ENCODE measurements at regions of chr10 and their contacts with region 1.

Region 1: DNA sequence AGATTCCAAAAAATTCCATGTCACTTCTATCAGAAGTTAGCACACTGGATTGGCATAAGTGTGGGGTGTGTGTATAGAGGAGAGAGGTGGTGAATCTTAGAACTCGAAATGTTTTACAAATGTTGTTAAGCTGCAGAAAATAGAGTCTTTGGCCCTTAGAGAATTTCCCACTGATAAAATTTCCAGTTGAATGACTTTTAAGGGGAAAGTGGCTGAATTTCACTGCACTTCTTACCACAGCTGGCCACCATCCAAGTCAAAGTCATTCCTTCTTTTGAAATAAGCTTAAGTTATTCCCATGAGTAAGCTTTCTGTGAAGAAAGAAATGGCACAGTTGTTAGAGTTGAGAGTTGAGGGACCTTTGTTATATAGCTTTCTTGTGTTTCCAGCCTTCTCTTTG is 13.9 kb downstream of the VCL start:
- DNase-seq: no peak
- CTCF ChIP-seq: no peak

Region 2: GRCh38 chr10:74026428-74027015 is 14.8 kb after region 1 on chr10:
- CTCF ChIA-PET with region 1: interaction called, 13 read pairs
- POLR2A ChIA-PET with region 1: interaction called, 4 read pairs
- DNase-seq: no peak
- CTCF ChIP-seq: no peak

Region 3: DNA sequence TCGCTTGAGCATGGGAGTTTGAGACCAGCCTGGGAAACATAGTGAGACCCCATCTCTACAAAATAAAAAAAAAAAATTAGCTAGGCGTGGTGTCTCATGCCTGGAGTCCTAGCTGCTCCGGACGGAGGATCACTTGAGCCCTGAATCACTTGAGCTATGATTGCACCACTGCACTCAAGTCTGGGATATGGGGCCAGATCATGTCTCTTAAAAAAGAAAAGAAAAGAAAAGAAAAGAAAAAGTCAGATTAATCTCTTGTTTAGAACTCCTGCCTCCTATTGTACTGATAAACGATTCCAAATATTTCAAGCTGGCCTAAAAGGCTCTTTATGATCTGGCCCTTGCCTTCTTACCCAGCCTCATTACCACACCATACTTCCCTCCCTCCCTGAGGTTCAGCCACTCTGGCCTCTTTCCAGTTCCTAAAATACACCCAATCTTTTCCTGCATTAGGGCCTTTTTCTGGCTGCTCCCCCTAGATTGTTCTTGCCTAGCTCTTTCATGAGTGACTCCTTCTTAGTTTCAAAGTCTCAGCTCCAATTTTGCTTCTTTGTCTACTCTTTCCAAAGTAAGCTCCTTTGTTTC is 27.9 kb after region 1 on chr10:
- CTCF ChIA-PET with region 1: no interaction called
- POLR2A ChIA-PET with region 1: no interaction called
- DNase-seq: no peak
- CTCF ChIP-seq: no peak

Measured in GM10248 (cell line).